ENCODE measurements at regions of chr1 and their contacts with region 1.

Region 1: GRCh38 chr1:79711001-79711431 is 704.5 kb upstream of the ADGRL4 start:
- DNase-seq: no peak
- ATAC-seq: peak; percentile 90
- H3K4me3 Mint-ChIP-seq: no peak overlapping the region
- H3K27ac Mint-ChIP-seq: peak overlapping the region; percentile 82
- H3K4me1 Mint-ChIP-seq: peaks cover 45% of the 10 kb centered on the region
- H3K27me3 Mint-ChIP-seq: no peaks in the 10 kb centered on the region
- CTCF ChIP-seq: no peak

Region 2: DNA sequence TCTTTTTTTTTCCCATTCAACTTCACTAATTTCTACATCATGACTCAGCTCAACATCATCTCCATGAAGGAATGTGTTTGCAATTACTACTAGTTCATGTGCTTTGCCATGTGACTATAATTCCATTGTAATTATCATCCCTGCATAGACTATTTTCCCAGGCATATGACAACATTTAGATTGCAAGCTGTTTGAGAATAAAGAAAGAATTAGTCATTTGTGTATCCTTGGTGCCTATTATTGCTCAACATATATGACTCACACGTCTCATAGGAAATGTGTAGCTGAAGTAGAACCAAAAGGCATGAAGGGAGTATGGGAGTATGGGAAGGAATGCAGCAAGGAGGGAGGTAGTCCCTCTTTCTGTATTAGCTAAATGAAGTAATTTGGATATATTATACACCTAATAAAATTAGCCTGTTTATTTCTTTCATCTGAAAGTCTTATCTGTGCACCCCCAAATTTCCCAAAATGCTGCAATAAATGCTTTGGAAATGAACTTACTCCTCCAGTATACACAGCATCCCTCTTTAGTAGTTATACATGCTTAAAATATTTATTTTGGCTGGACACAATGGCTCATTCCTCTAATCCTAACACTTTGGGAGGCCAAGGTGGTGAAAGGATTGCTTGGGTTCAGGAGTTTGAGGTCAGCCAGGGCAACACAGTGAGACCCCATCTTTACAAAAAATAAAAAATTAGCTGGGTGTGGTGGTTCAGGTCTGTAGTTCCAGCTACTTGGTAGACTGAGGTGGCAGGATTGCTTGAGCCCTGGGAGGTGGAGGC is 387.6 kb before region 1 on chr1:
- CTCF ChIA-PET with region 1: no interaction called
- POLR2A ChIA-PET with region 1: no interaction called
- intact Hi-C with region 1: no loop called
- DNase-seq: no peak
- ATAC-seq: no peak
- H3K4me3 Mint-ChIP-seq: no peak overlapping the region
- H3K27ac Mint-ChIP-seq: no peak overlapping the region
- H3K4me1 Mint-ChIP-seq: no peaks in the 10 kb centered on the region
- H3K27me3 Mint-ChIP-seq: no peaks in the 10 kb centered on the region
- CTCF ChIP-seq: no peak

Region 3: GRCh38 chr1:79638382-79638781 is 72.6 kb before region 1 on chr1:
- CTCF ChIA-PET with region 1: no interaction called
- POLR2A ChIA-PET with region 1: no interaction called
- intact Hi-C with region 1: loop called (anchors 2 kb)
- DNase-seq: no peak
- ATAC-seq: peak; percentile 57
- H3K4me3 Mint-ChIP-seq: no peak overlapping the region
- H3K27ac Mint-ChIP-seq: no peak overlapping the region
- H3K4me1 Mint-ChIP-seq: peaks cover 5% of the 10 kb centered on the region
- H3K27me3 Mint-ChIP-seq: no peaks in the 10 kb centered on the region
- CTCF ChIP-seq: no peak

Region 4: GRCh38 chr1:79667848-79668696 is 42.9 kb before region 1 on chr1:
- CTCF ChIA-PET with region 1: no interaction called
- POLR2A ChIA-PET with region 1: no interaction called
- intact Hi-C with region 1: loop called (anchors 2 kb)
- DNase-seq: no peak
- ATAC-seq: peak; percentile 70
- H3K4me3 Mint-ChIP-seq: no peak overlapping the region
- H3K27ac Mint-ChIP-seq: peak overlapping the region; percentile 47
- H3K4me1 Mint-ChIP-seq: peaks cover 11% of the 10 kb centered on the region
- H3K27me3 Mint-ChIP-seq: no peaks in the 10 kb centered on the region
- CTCF ChIP-seq: no peak

Region 5: DNA sequence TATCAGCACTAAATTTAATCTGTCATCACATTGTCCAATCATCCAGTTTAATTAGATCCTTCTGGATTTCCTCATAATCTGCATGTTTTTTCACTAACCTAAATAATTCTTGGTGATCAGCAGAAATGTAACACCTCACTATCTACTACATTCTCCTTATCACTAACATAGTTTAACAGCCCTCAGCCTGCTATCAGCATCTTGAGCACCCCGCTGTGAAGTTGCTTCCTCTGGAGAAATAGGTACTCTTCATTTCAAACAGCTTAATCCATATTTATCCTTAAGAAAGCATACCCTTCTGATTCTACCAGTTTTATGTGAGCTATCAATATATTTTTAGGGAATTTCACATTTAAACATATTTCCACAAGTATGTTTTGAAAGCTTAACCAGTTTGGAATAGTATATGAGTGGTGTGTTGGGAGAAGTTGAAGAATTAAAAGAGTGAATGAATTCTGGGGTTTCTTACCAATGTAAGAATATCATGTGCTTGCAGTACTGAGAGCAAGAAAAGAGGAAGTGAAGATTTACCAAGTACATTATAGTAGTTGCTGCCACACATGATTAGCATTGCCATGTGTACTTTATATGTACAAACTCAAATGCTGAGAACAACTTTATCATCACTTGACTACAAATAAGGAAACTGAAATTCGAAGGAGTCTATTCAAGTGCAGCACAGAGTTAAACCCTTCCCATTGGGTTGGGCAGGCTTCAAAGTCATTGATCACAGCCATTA is 66.6 kb after region 1 on chr1:
- CTCF ChIA-PET with region 1: no interaction called
- POLR2A ChIA-PET with region 1: no interaction called
- intact Hi-C with region 1: loop called (anchors 1 kb)
- DNase-seq: no peak
- ATAC-seq: peak; percentile 93
- H3K4me3 Mint-ChIP-seq: no peak overlapping the region
- H3K27ac Mint-ChIP-seq: peak overlapping the region; percentile 43
- H3K4me1 Mint-ChIP-seq: peaks cover 8% of the 10 kb centered on the region
- H3K27me3 Mint-ChIP-seq: no peaks in the 10 kb centered on the region
- CTCF ChIP-seq: no peak